Stomach (tissue), 19 donors: ENCODE measurements at regions of chr14 and their contacts with region 1.

Region 1: GRCh38 chr14:80987235-80988032 is 32.0 kb downstream of the TSHR start:
- DNase-seq: peak; percentile 74 to 86
- H3K4me3 ChIP-seq: no peak overlapping the region
- H3K27ac ChIP-seq: no peak overlapping the region
- H3K4me1 ChIP-seq: no peaks in the 10 kb centered on the region
- H3K27me3 ChIP-seq: peaks cover 0 to 42% (median 0%) of the 10 kb centered on the region in 3 donors
- CTCF ChIP-seq: peak in 5 of 7 experiments; percentile 80 to 89 (median 86)
- EP300 ChIP-seq: no peak
- POLR2A ChIP-seq: no peak

Region 2: DNA sequence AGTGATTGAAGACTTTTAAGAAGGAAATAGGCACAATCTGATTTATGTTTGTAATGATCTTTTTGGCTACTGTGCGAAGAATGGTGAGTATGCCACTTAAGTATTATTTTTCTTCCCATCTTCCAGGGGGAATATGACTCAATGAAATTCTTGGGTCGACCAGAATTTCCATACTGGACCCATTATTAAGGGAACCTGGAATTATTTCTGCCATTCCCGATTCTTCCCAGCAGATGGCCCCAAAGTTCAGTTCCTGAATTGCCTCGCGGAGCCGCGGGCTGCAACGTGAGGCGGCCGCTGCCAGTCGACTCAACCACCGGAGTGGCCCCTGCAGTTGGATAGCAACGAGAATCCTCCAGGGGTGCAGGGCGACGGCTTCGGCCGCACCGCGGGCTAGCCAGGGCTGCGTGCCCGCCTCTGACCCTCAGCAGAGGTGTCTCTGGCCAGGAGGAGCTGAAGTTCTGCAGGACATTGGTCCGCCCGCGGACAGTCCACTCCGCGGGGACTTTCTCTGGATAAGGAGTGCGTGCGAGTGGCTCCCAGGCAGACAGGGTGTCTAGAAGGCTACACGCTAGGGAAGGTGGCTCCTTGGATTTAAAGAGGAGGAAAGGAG is 32.6 kb before region 1 on chr14:
- intact Hi-C with region 1: loop called (anchors 2 kb)
- DNase-seq: peak; percentile 84 to 89
- H3K4me3 ChIP-seq: peak overlapping the region; percentile 48 to 64 (median 50)
- H3K27ac ChIP-seq: peak overlapping the region in 1 of 5 donors; percentile 13
- H3K4me1 ChIP-seq: peaks cover 8 to 13% (median 10%) of the 10 kb centered on the region in 4 donors
- H3K27me3 ChIP-seq: peaks cover 0 to 20% (median 9%) of the 10 kb centered on the region in 3 donors
- CTCF ChIP-seq: peak in 5 of 7 experiments; percentile 58 to 82 (median 63)
- EP300 ChIP-seq: no peak
- POLR2A ChIP-seq: no peak